Activated B cell treated with CpG ODN at 0.5 μM for 24 hours (primary cell): ENCODE measurements at regions of chr19 and their contacts with region 1.

Region 1: GRCh38 chr19:8580710-8581281 is 3.6 kb upstream of the MYO1F start:
- DNase-seq: peak; percentile 81
- ATAC-seq: peak; percentile 73
- H3K4me3 Mint-ChIP-seq: no peak overlapping the region
- H3K27ac Mint-ChIP-seq: no peak overlapping the region
- H3K4me1 Mint-ChIP-seq: peaks cover 35% of the 10 kb centered on the region
- H3K27me3 Mint-ChIP-seq: peaks cover 2% of the 10 kb centered on the region
- CTCF ChIP-seq: peak; percentile 95

Region 2: DNA sequence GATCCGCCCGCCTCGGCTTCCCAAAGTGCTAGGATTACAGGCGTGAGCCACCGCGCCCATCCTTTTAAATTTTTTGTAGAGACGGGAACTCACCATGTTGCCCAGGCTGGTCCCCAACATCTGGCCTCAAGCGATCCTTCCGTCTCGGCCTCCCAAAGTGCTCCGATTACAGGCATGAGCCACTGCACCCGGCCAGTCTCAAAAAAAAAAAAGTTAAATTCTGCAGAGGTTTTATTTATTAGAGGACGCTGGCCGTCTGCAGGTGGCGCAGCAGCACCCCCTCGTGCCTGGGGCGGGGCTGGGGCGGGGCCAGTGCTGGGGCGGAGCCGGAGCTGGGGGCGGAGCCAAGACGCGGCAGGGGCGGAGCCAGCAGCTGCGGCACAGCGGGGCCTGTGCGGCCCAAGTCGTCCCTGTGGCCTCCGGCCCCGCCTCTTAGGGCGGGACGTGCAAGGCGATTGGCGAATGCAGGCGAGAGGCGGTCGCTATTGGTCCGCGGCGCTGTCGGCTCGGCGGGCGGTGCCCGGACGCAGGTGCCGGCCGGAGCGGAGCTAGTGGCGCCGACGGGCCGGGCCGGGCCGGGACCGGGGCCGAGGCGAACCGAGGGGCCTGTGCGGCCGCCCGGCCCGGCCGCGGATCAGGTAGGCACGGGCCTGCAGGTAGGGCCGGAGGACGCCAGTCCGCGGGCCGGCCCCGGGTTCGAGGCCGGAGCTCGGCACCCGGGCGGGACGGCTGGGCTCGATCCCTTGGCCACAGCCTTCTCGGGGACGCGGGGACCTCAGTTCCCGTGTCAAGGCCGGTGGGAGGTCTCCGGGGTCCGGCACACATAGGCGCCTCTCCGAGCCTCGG is 167.8 kb before region 1 on chr19 and contains the start of gene MARCHF2:
- CTCF ChIA-PET with region 1: interaction called, 44 read pairs
- POLR2A ChIA-PET with region 1: interaction called, 4 read pairs
- intact Hi-C with region 1: loop called (anchors 1 kb)
- DNase-seq: peak; percentile 96
- ATAC-seq: peak; percentile 99
- H3K4me3 Mint-ChIP-seq: peak within 1 kb of the TSS; percentile 70
- H3K27ac Mint-ChIP-seq: no peak within 1 kb of the TSS
- H3K4me1 Mint-ChIP-seq: peaks cover 9% of the 10 kb centered on the region
- H3K27me3 Mint-ChIP-seq: no peaks in the 10 kb centered on the region
- CTCF ChIP-seq: no peak
- total RNA-seq, gene MARCHF2: 24.8 and 25.6 TPM in 2 replicates

Region 3: GRCh38 chr19:8569066-8569771 is 11.6 kb before region 1 on chr19:
- CTCF ChIA-PET with region 1: interaction called, 39 read pairs
- POLR2A ChIA-PET with region 1: interaction called, 5 read pairs
- intact Hi-C with region 1: loop called (anchors 1 kb)
- DNase-seq: peak; percentile 19
- ATAC-seq: peak; percentile 90
- H3K4me3 Mint-ChIP-seq: peak overlapping the region; percentile 48
- H3K27ac Mint-ChIP-seq: peak overlapping the region; percentile 84
- H3K4me1 Mint-ChIP-seq: peaks cover 54% of the 10 kb centered on the region
- H3K27me3 Mint-ChIP-seq: no peaks in the 10 kb centered on the region
- CTCF ChIP-seq: no peak

Region 4: DNA sequence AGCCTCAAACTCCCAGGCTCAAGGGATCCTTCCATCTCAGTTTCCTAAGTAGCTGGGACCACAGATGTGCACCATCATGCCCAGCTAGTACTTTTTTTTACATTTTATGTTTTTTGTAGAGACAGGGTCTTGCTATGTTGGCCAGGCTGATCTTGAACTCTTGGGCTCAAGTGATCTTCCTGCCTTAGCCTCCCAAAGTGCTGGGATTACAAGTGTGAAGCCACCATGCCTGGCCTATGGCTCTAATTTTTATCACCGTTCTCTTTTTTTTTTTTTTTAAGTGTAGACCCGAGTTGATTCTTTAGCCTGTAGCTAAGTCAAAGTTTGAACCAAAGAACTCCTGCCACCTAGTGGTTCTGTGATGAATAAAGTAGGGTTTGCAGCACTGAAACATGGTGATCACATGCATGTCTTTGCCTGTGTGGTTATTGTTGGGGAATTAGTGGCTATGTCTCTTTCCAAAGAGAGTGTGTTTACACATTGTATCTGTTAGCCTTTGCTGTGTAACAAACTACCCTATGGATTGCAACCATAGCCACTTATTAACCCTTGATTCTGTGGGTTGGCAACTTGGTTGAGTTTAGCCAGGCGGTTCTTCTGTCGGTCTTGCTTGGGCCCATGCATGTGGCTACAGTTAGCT is 61.2 kb after region 1 on chr19:
- CTCF ChIA-PET with region 1: interaction called, 11 read pairs
- POLR2A ChIA-PET with region 1: no interaction called
- intact Hi-C with region 1: loop called (anchors 1 kb)
- DNase-seq: no peak
- ATAC-seq: no peak
- H3K4me3 Mint-ChIP-seq: no peak overlapping the region
- H3K27ac Mint-ChIP-seq: no peak overlapping the region
- H3K4me1 Mint-ChIP-seq: no peaks in the 10 kb centered on the region
- H3K27me3 Mint-ChIP-seq: peaks cover 34% of the 10 kb centered on the region
- CTCF ChIP-seq: no peak